CD8-positive, alpha-beta memory T cell (primary cell): ENCODE measurements at regions of chr16 and their contacts with region 1.

Region 1: DNA sequence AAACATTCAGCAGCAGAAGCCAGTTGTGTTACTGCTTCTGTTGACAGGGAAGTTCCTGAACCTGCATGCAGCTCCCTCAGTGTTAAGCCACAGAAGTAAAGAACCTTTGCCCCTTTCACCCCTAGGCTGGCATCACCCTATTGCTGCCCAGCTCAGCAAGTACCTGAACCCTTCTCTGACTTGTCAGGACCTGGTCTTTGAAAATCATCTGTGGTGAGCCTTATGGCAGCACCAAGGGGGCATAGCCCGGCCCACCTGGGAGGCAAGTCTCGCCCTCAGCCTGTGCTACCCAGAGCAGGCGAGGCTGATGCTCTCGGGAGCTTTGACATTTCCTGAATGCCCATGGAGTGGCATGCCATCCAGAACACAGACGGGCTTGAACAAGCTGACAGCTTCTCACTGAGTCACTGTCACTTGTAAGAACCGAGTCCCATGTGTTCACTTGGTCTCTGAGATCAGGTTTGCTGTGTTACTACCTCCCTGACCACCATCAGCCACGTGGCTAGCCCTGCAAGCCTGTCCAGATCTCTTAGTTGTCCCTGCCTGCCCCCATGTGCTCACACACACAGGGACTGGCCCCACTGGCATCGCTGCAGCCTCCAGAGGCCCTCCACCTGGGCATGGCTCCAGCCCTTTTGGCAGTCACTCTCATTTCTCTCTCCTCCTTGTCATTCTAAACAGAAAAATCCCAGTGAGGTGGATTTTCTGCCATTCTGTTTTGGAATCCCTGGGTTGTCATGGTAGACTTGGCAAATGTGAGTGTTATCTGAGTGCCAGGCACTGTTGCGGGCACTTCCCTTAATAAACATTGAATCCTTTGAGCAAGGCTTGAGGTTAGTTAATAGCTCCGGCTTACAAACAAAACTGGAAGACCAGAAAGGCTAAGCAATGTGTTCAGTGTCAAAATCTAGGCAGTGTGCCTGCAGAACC is 2.9 kb upstream of the CARMIL2 start:
- DNase-seq: no peak
- H3K4me3 ChIP-seq: no peak overlapping the region
- H3K4me3 Mint-ChIP-seq: peak overlapping the region in 1 of 7 donors; percentile 36
- H3K27ac ChIP-seq: no peak overlapping the region
- H3K27ac Mint-ChIP-seq: peak overlapping the region in 2 of 8 donors; percentile 10 to 42
- H3K4me1 ChIP-seq: peaks cover 22% of the 10 kb centered on the region
- H3K4me1 Mint-ChIP-seq: peaks cover 4 to 24% (median 11%) of the 10 kb centered on the region in 3 donors
- H3K27me3 ChIP-seq: no peaks in the 10 kb centered on the region
- H3K27me3 Mint-ChIP-seq: no peaks in the 10 kb centered on the region

Region 2: DNA sequence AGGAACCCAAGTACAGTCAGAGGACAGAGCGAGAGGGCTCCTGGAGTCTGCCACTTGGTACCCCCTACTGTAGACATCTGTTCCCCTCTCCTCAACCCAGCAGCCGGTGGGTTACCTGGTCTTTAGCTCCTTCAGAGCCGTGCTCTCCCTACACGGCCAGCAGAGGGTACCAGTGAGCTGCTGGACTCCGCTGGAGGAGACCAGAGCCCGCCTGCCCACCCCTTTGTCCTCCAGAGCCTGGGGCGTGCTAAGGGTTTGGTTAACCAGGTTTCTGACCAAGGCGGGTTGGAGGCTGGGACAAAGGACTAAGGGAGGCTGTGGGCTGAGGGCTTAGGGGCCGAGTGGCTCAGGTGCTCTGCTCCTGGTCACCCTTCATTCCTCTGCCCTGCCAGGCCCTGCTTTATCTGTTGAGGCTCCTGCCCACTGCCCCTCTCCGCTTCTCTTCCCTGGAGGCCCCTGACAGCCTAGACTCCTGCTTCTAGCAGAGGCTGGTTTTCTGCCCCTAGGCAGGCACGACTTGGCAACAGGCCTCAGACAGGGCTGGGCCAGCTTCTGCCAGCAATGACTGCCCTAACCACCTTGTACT is 213.8 kb before region 1 on chr16:
- CTCF ChIA-PET with region 1: no interaction called
- POLR2A ChIA-PET with region 1: no interaction called
- DNase-seq: peak in 4 of 5 donors; percentile 20 to 63 (median 26)
- H3K4me3 ChIP-seq: no peak overlapping the region
- H3K4me3 Mint-ChIP-seq: peak overlapping the region in 1 of 7 donors; percentile 8
- H3K27ac ChIP-seq: no peak overlapping the region
- H3K27ac Mint-ChIP-seq: no peak overlapping the region
- H3K4me1 ChIP-seq: peaks cover 6% of the 10 kb centered on the region
- H3K4me1 Mint-ChIP-seq: peaks cover 0 to 14% (median 10%) of the 10 kb centered on the region in 3 donors
- H3K27me3 ChIP-seq: peaks cover 9% of the 10 kb centered on the region
- H3K27me3 Mint-ChIP-seq: peaks cover 34 to 62% of the 10 kb centered on the region in 2 donors

Region 3: GRCh38 chr16:67514382-67514828 is 127.6 kb before region 1 on chr16:
- CTCF ChIA-PET with region 1: interaction called, 89 read pairs
- POLR2A ChIA-PET with region 1: no interaction called
- DNase-seq: peak; percentile 72 to 85 (median 73)
- H3K4me3 ChIP-seq: no peak overlapping the region
- H3K4me3 Mint-ChIP-seq: peak overlapping the region in 1 of 7 donors; percentile 32
- H3K27ac ChIP-seq: no peak overlapping the region
- H3K27ac Mint-ChIP-seq: peak overlapping the region in 4 of 8 donors; percentile 33 to 74 (median 63)
- H3K4me1 ChIP-seq: peaks cover 11% of the 10 kb centered on the region
- H3K4me1 Mint-ChIP-seq: peaks cover 9 to 17% (median 14%) of the 10 kb centered on the region in 3 donors
- H3K27me3 ChIP-seq: no peaks in the 10 kb centered on the region
- H3K27me3 Mint-ChIP-seq: peaks cover 0 to under 1% of the 10 kb centered on the region in 2 donors

Region 4: GRCh38 chr16:67546761-67547422 is 95.2 kb before region 1 on chr16:
- CTCF ChIA-PET with region 1: interaction called, 235 read pairs
- POLR2A ChIA-PET with region 1: interaction called, 26 read pairs
- DNase-seq: peak; percentile 64 to 79 (median 67)
- H3K4me3 ChIP-seq: peak overlapping the region; percentile 64
- H3K4me3 Mint-ChIP-seq: peak overlapping the region in 3 of 7 donors; percentile 13 to 66 (median 54)
- H3K27ac ChIP-seq: no peak overlapping the region
- H3K27ac Mint-ChIP-seq: peak overlapping the region; percentile 12 to 93 (median 79)
- H3K4me1 ChIP-seq: peaks cover 39% of the 10 kb centered on the region
- H3K4me1 Mint-ChIP-seq: peaks cover 30 to 55% (median 32%) of the 10 kb centered on the region in 3 donors
- H3K27me3 ChIP-seq: no peaks in the 10 kb centered on the region
- H3K27me3 Mint-ChIP-seq: no peaks in the 10 kb centered on the region

Region 5: GRCh38 chr16:67561824-67562525 is 80.1 kb before region 1 on chr16:
- CTCF ChIA-PET with region 1: interaction called, 51 read pairs
- POLR2A ChIA-PET with region 1: interaction called, 39 read pairs
- DNase-seq: peak; percentile 95 to 98 (median 96)
- H3K4me3 ChIP-seq: peak overlapping the region; percentile 67
- H3K4me3 Mint-ChIP-seq: peak overlapping the region; percentile 87 to 98 (median 91)
- H3K27ac ChIP-seq: peak overlapping the region; percentile 78
- H3K27ac Mint-ChIP-seq: peak overlapping the region; percentile 85 to 96 (median 93)
- H3K4me1 ChIP-seq: peaks cover 32% of the 10 kb centered on the region
- H3K4me1 Mint-ChIP-seq: peaks cover 35 to 60% (median 48%) of the 10 kb centered on the region in 3 donors
- H3K27me3 ChIP-seq: no peaks in the 10 kb centered on the region
- H3K27me3 Mint-ChIP-seq: no peaks in the 10 kb centered on the region

Region 6: GRCh38 chr16:67598527-67598926 is 43.5 kb before region 1 on chr16:
- CTCF ChIA-PET with region 1: no interaction called
- POLR2A ChIA-PET with region 1: no interaction called
- DNase-seq: no peak
- H3K4me3 ChIP-seq: no peak overlapping the region
- H3K4me3 Mint-ChIP-seq: no peak overlapping the region
- H3K27ac ChIP-seq: no peak overlapping the region
- H3K27ac Mint-ChIP-seq: peak overlapping the region in 2 of 8 donors; percentile 30 to 70
- H3K4me1 ChIP-seq: peaks cover 11% of the 10 kb centered on the region
- H3K4me1 Mint-ChIP-seq: peaks cover 36 to 64% (median 57%) of the 10 kb centered on the region in 3 donors
- H3K27me3 ChIP-seq: no peaks in the 10 kb centered on the region
- H3K27me3 Mint-ChIP-seq: no peaks in the 10 kb centered on the region

Region 7: DNA sequence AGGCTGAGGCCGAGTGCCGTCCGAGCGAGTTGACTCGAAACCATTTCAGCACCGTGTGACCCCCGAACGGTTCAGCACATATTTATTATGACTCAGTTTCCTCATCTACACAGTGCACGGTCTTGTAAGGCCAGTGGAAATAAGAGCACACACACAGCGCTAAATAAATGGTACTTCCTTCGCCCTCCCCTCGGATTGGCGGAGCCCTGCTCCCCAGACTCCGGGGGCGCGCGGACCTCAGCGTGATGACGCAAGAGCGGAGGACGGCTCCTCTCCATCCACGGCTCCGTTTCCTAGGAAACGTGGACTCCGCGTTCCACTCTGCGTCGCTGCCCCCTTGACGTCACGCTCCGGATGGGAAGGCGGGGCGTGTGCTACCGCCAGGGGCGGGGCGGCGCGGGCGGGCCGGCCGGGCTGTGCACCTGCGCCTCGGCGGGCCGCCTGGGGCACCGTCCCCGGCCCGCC is 18.6 kb after region 1 on chr16 and contains the start of gene PARD6A:
- CTCF ChIA-PET with region 1: interaction called, 34 read pairs
- POLR2A ChIA-PET with region 1: interaction called, 24 read pairs
- DNase-seq: peak; percentile 94 to 98 (median 95)
- H3K4me3 ChIP-seq: peak within 1 kb of the TSS; percentile 93
- H3K4me3 Mint-ChIP-seq: peak within 1 kb of the TSS; percentile 93 to 99 (median 94)
- H3K27ac ChIP-seq: peak within 1 kb of the TSS; percentile 98
- H3K27ac Mint-ChIP-seq: peak within 1 kb of the TSS; percentile 94 to 99 (median 96)
- H3K4me1 ChIP-seq: peaks cover 25% of the 10 kb centered on the region
- H3K4me1 Mint-ChIP-seq: peaks cover 14 to 37% (median 17%) of the 10 kb centered on the region in 3 donors
- H3K27me3 ChIP-seq: no peaks in the 10 kb centered on the region
- H3K27me3 Mint-ChIP-seq: peaks cover 0 to 3% of the 10 kb centered on the region in 2 donors
- total RNA-seq, gene PARD6A: 16.7 to 18.3 TPM

Region 8: DNA sequence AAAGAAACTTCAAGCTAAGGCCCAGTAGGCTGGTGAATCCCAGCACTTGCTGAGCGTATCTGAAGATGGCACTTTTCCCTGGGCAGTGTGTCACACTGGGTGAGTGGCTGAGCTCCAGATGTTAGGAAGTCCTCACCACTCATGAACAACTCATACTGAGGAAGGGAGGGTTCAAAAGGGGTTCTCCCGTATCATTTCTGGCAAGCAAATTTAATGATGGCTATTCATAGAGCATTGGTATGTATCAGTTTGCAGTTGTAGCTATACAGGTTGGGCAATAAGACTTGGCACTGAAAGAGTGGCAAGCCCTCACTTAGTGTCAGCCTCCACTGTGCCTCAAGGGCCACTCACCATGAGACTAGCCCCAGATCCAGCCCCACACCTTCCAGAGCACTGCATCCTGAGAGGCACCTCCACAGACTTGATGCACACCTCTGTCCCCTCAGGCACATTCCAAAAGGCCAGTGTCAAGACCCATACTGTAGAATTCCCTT is 66.4 kb after region 1 on chr16:
- CTCF ChIA-PET with region 1: no interaction called
- POLR2A ChIA-PET with region 1: no interaction called
- DNase-seq: no peak
- H3K4me3 ChIP-seq: no peak overlapping the region
- H3K4me3 Mint-ChIP-seq: peak overlapping the region in 1 of 7 donors; percentile 29
- H3K27ac ChIP-seq: no peak overlapping the region
- H3K27ac Mint-ChIP-seq: peak overlapping the region in 2 of 8 donors; percentile 11 to 18
- H3K4me1 ChIP-seq: peaks cover 10% of the 10 kb centered on the region
- H3K4me1 Mint-ChIP-seq: peaks cover 14 to 37% (median 36%) of the 10 kb centered on the region in 3 donors
- H3K27me3 ChIP-seq: no peaks in the 10 kb centered on the region
- H3K27me3 Mint-ChIP-seq: no peaks in the 10 kb centered on the region